ENCODE measurements at regions of chr5 and their contacts with region 1.

Region 1: DNA sequence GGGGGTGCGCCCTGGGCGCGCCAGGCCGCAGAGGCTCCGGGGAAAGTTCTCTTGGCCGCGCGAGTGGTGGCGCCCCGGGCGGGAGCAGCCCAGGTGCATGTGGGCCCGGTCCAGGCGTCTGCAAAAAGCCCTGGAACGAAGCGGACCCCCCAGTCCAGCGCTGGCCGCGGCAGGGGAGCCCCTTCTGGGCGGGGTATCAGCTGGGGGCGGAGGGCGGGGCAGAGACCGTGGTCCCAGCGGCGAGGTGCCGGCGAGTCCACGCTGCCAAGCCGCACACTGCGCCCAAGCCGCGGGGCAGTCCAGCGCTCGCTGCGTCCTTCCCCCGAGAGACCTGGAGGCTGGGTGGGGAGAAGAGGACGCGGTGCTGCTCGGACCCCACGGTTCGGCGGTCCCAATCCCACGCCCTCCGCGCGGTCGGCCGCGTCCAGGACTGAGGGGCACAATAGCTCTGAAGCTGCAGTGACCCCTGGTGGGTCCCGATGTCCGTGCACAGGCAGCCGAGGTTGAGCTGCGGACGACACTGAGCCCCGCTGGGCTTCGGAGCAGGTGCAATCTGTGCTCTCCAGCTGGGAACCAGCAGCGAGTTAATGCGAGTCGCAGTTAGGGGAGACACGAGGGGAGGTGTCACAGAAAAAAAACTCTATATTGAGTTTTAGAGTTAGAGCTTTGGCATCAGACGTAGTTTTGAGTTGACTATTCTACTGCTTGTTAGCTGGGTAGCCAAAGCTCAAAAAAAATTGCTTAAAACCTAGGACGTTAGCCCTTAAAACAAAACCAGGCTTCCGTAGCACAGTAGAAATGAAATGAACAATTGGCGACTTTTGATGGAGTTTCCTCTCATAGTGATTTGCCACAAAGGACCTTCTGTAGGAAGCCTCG is 1.1 kb upstream of the EPB41L4A start:
- DNase-seq: peak; percentile 71 to 93 (median 85)

Region 2: DNA sequence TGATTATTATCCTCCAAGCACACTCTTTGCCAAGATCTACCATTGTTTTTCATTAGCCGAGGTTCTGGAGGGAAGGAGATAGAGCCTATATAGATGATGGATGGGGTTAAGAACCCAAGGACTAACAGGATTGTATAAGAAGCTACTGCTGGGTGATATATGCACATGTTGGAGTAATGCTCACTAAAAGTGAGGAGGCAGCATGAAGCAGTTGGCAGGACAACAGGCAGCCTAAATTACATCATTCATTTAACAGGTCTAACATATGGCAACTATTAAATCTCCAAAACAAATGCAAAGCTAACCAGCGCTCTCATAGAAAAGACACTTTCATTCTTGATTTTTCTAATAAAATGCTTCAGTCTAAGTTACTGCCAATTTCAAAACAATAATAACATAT is 294.3 kb before region 1 on chr5:
- intact Hi-C with region 1: no loop called
- DNase-seq: no peak

Region 3: DNA sequence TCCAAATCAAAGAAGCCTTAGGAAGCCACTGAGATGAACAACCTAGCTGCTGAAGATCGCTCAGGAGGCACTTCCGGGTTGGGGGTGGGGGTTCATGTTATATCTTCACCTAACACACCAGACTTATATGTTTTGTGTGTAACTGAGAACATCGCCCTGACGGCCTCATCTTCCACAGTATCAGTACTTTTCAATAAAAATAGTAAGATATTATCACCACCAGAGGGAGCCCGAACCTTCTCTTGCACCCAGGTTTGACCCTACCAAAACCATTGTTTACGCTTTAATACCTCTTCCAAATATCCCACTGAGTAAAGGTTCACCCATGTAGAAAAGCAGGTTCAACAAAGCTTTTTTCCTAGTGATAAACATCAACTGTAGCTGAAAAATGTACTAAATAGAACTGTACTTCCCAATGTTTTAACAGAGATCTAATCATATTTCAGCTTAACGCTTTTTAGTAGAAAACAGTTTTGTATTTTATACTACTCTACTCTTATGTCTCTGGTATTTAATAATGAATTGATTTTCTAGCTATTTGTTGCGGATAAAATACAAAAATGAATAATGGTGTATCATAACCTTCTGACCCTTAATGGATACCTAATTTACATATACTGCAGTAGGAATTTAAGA is 245.1 kb before region 1 on chr5:
- intact Hi-C with region 1: loop called (anchors 1 kb)
- DNase-seq: peak in 27 of 42 donors; percentile 16 to 75 (median 37)

Region 4: GRCh38 chr5:112210430-112211005 is 209.7 kb before region 1 on chr5:
- intact Hi-C with region 1: loop called (anchors 5 kb)
- DNase-seq: peak in 41 of 42 donors; percentile 8 to 82 (median 57)

Region 5: DNA sequence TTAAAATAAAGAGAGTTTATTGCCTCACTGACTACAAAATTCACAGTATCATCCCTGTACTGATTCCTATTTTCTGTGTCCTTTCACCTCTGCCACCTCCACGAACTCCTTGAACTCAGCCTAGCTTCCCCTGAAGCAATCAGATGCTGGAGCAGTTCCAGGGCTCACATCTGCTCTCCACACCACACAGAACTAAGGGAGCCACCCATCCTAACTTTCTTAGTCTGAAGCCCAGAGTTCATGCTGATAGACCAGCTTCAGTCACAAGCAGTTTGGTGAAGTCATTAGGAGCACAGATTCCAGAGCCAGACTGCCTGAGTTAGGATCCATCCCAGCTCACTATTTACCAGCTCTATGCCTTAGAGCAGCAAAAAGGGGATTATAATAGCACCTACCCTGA is 14.4 kb after region 1 on chr5:
- intact Hi-C with region 1: no loop called
- DNase-seq: no peak

Region 6: DNA sequence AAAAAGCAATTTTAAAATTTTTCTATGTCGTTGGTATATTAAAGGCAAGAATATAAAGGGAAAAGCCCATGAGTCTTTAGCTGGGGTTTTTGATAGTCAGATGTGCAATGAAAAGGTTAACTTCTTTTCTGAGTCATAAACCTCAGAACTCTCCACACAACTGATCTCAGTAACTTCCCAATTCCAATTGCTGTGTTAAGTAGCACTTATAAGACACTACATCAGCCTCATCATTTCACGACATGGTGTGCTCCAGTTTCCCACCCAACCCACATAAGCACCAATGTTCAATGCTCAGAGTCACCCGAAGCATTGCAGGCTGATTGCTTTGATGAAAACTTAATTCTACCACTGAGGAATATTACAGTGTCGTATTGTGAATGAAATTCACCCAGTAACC is 858.8 kb after region 1 on chr5:
- intact Hi-C with region 1: no loop called
- DNase-seq: no peak

Measured in head of caudate nucleus (tissue), 42 donors.